ENCODE measurements at regions of chr7 and their contacts with region 1.

Region 1: GRCh38 chr7:74575138-74575727 is 82.3 kb upstream of the GTF2I start:
- DNase-seq: peak in 1 of 4 donors; percentile 61
- ATAC-seq: peak; percentile 77
- H3K4me3 ChIP-seq: no peak overlapping the region
- H3K27ac ChIP-seq: peak overlapping the region in 1 of 2 donors; percentile 48
- H3K4me1 ChIP-seq: peaks cover 0 to 4% of the 10 kb centered on the region in 2 donors
- H3K27me3 ChIP-seq: no peaks in the 10 kb centered on the region
- CTCF ChIP-seq: no peak

Region 2: GRCh38 chr7:74429153-74429747 is 146.0 kb before region 1 on chr7:
- intact Hi-C with region 1: loop called in 1 of 2 experiments (anchors 10 kb)
- DNase-seq: no peak
- ATAC-seq: peak; percentile 51
- H3K4me3 ChIP-seq: no peak overlapping the region
- H3K27ac ChIP-seq: no peak overlapping the region
- H3K4me1 ChIP-seq: peaks cover 0 to 3% of the 10 kb centered on the region in 2 donors
- H3K27me3 ChIP-seq: no peaks in the 10 kb centered on the region
- CTCF ChIP-seq: no peak

Region 3: GRCh38 chr7:74598558-74598957 is 23.3 kb after region 1 on chr7:
- intact Hi-C with region 1: no loop called
- DNase-seq: no peak
- ATAC-seq: peak; percentile 31
- H3K4me3 ChIP-seq: no peak overlapping the region
- H3K27ac ChIP-seq: no peak overlapping the region
- H3K4me1 ChIP-seq: no peaks in the 10 kb centered on the region
- H3K27me3 ChIP-seq: no peaks in the 10 kb centered on the region
- CTCF ChIP-seq: no peak

Measured in left lung (tissue), 14 donors.